Common myeloid progenitor, CD34-positive (primary cell): ENCODE measurements at regions of chr15 and their contacts with region 1.

Region 1: DNA sequence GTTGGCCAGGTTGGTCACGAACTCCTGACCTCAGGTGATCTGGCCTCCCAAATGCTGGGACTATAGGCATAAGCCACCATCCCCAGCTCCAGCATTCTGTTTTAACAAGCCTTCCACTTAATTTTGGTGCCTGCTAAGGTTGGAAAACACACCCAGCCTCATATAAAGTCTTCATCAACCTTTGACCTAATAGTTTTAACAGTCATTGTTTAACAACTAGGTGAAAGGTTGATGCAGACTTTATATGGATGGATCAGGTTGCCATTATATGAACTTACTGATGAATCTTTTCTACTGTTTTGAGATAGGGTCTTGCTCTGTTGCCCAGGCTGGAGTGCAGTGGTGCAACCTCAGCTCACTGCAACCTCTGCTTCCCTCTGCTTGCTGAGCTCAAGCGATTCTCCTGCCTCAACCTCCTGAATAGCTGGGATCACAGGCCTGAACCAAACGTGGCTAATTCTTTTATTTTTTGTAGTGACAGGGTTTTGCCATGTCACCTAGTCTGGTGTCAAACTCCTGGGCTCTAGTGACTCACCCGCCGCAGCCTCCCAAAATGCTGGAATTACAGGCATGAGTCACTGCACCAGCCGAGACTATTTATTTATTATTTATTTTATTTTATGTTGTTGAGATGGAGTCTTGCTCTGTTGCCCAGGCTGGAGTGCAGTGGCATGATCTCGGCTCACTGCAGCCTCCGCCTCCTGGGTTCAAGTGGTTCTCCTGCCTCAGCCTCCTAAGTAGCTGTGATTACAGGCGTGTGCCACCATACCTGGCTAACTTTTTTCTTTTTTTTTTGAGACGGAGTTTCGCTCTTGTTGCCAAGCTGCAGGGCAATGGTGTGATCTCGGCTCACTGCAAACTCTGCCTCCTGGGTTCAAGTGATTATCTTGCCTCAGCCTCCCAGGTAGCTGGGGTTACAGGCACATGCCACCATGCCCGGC is 3.1 kb upstream of the RPAP1 start:
- DNase-seq: peak in 1 of 3 donors; percentile 18
- H3K4me3 ChIP-seq: no peak overlapping the region
- H3K27ac ChIP-seq: no peak overlapping the region
- H3K4me1 ChIP-seq: peaks cover 3 to 11% (median 5%) of the 10 kb centered on the region in 4 experiments
- H3K27me3 ChIP-seq: no peaks in the 10 kb centered on the region

Region 2: GRCh38 chr15:41557673-41558399 is 10.7 kb after region 1 on chr15:
- CTCF ChIA-PET with region 1: interaction called, 14 read pairs
- POLR2A ChIA-PET with region 1: interaction called, 3 read pairs
- DNase-seq: peak; percentile 82 to 94 (median 90)
- H3K4me3 ChIP-seq: peak overlapping the region in 5 of 7 experiments; percentile 33 to 75 (median 70)
- H3K27ac ChIP-seq: no peak overlapping the region
- H3K4me1 ChIP-seq: peaks cover 4 to 38% (median 28%) of the 10 kb centered on the region in 4 experiments
- H3K27me3 ChIP-seq: peaks cover 0 to 13% (median 4%) of the 10 kb centered on the region in 5 experiments